GM12878 (cell line): ENCODE measurements at regions of chr2 and their contacts with region 1.

Region 1: GRCh38 chr2:161556440-161556839 is 67.8 kb upstream of the SLC4A10 start:
- DNase-seq: no peak
- ATAC-seq: no peak
- H3K4me3 ChIP-seq: no peak overlapping the region
- H3K27ac ChIP-seq: no peak overlapping the region
- H3K4me1 ChIP-seq: no peaks in the 10 kb centered on the region
- H3K27me3 ChIP-seq: no peaks in the 10 kb centered on the region
- CTCF ChIP-seq: no peak; a peak in 1 of 6 replicates
- EP300 ChIP-seq: no peak
- POLR2A ChIP-seq: no peak
- RAD21 ChIP-seq: no peak

Region 2: DNA sequence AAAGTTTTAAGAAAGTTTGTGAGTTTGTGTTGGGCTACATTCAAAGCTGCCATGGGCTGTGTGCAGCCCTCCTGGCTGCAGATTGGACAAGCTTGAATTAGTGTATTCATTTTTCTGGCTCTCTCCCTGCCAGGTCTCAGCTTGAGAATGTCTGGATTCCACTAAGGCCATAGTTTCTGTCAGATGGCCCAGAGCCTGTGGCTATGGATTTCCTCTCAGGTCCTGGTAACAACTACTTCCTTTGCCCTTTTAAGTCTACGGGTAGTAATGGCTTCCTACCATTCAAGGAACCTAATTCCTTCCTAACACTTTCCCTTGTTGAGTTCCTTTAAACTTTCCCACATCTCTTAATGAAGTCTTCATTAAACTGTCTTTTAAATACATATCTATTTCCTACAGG is 272.5 kb before region 1 on chr2:
- CTCF ChIA-PET with region 1: no interaction called
- POLR2A ChIA-PET with region 1: no interaction called
- RAD21 ChIA-PET with region 1: no interaction called
- SMC1A ChIA-PET with region 1: no interaction called
- in situ Hi-C with region 1: no loop called
- intact Hi-C with region 1: loop called (anchors 5 kb)
- DNase-seq: no peak
- ATAC-seq: no peak
- H3K4me3 ChIP-seq: no peak overlapping the region
- H3K27ac ChIP-seq: no peak overlapping the region
- H3K4me1 ChIP-seq: no peaks in the 10 kb centered on the region
- H3K27me3 ChIP-seq: no peaks in the 10 kb centered on the region
- CTCF ChIP-seq: no peak
- EP300 ChIP-seq: no peak
- POLR2A ChIP-seq: no peak
- RAD21 ChIP-seq: no peak

Region 3: DNA sequence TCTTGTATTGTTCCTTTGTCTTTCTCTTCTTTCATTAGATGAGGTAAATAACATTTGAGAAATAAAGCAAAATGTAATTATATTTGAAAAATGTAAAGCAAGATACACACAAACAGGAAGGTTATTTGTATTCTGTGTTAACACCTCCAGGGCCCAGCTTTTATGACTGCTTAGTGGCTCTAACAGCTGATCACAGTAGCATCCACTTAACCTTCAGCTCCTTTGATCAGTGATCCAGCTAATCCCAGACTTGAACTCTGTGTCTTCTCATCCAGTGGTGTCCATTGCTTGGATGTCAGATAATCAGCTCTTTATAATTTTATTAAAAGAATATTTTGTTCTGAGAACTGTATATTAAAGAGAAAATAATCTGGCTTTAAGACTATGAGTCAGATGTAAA is 203.7 kb before region 1 on chr2:
- CTCF ChIA-PET with region 1: no interaction called
- POLR2A ChIA-PET with region 1: no interaction called
- RAD21 ChIA-PET with region 1: no interaction called
- SMC1A ChIA-PET with region 1: no interaction called
- in situ Hi-C with region 1: no loop called
- intact Hi-C with region 1: no loop called
- DNase-seq: no peak
- ATAC-seq: peak; percentile 68
- H3K4me3 ChIP-seq: no peak overlapping the region
- H3K27ac ChIP-seq: no peak overlapping the region
- H3K4me1 ChIP-seq: peaks cover 6% of the 10 kb centered on the region; the same call in 1 of the 2 replicates
- H3K27me3 ChIP-seq: no peaks in the 10 kb centered on the region
- CTCF ChIP-seq: no peak
- EP300 ChIP-seq: no peak
- POLR2A ChIP-seq: no peak
- RAD21 ChIP-seq: no peak